Colonic mucosa (tissue), 4 donors: ENCODE measurements at regions of chr3 and their contacts with region 1.

Region 1: GRCh38 chr3:124688581-124689454 is 41.4 kb upstream of the UMPS start:
- DNase-seq: peak; percentile 87
- H3K4me3 ChIP-seq: no peak overlapping the region
- H3K27ac ChIP-seq: no peak overlapping the region
- H3K4me1 ChIP-seq: no peaks in the 10 kb centered on the region
- H3K27me3 ChIP-seq: no peaks in the 10 kb centered on the region
- CTCF ChIP-seq: peak; percentile 85

Region 2: DNA sequence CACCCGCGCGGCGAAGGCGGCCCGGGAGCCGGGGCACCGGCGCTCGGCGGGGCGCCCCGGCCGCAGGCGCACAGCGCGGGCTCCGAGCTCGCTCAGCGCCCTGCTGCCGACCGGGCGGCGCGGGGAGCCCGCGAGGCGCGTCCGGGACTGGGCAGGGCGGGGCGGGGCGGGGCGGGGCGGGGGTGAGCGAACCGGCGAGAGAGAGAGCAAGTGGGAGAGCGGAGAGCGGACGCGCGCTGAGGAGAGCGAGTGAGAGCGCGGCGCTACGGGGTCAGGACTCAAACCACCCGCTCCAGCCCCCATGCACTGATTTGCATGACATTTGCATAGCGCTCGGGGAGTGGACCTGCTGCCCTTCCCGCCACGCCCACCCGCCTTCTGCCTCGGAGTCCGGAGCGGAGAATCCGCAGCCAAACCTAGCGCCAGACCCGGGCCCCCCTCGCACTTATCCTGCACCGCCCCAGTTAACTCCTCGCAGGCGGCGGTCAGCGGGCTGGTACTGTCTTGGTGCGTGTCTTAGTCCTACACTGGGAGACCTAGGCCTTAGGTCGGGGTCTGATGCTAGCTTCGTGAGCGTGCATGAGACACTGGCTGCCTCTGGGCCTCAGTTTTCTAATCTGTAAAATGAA is 804.5 kb before region 1 on chr3 and contains the start of gene MYLK:
- intact Hi-C with region 1: no loop called
- DNase-seq: peak; percentile 69
- H3K4me3 ChIP-seq: peak within 1 kb of the TSS; percentile 45
- H3K27ac ChIP-seq: no peak within 1 kb of the TSS
- H3K4me1 ChIP-seq: peaks cover 4% of the 10 kb centered on the region
- H3K27me3 ChIP-seq: no peaks in the 10 kb centered on the region
- CTCF ChIP-seq: no peak
- total RNA-seq, gene MYLK: 58.8 to 267 TPM

Region 3: DNA sequence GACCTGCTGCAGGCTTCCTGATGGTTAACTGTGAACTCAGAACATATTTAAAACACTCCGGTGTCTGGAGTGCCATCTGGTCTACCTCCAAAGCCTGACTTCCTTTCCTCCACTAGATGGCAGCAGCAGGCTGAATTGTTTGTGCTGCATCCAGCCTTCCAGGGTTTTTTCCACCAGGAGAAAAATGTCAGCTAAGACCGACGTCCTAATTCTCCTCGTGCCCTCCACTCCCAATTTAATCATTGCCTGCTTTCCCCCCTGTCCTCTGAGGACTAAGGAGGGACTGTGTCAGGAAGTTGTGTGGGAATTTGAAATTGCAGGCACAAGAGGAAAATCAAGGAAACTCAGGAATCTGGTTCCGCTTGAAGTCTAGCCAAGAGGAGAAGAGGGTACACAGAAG is 123.8 kb before region 1 on chr3:
- intact Hi-C with region 1: loop called (anchors 2 kb)
- DNase-seq: peak; percentile 89
- H3K4me3 ChIP-seq: no peak overlapping the region
- H3K27ac ChIP-seq: no peak overlapping the region
- H3K4me1 ChIP-seq: no peaks in the 10 kb centered on the region
- H3K27me3 ChIP-seq: no peaks in the 10 kb centered on the region
- CTCF ChIP-seq: peak; percentile 88

Region 4: GRCh38 chr3:124620600-124621063 is 68.2 kb before region 1 on chr3:
- intact Hi-C with region 1: loop called (anchors 5 kb)
- DNase-seq: peak; percentile 83
- H3K4me3 ChIP-seq: no peak overlapping the region
- H3K27ac ChIP-seq: peak overlapping the region; percentile 55
- H3K4me1 ChIP-seq: no peaks in the 10 kb centered on the region
- H3K27me3 ChIP-seq: no peaks in the 10 kb centered on the region
- CTCF ChIP-seq: peak; percentile 32

Region 5: GRCh38 chr3:124663690-124664089 is 25.1 kb before region 1 on chr3:
- intact Hi-C with region 1: no loop called
- DNase-seq: no peak
- H3K4me3 ChIP-seq: no peak overlapping the region
- H3K27ac ChIP-seq: no peak overlapping the region
- H3K4me1 ChIP-seq: no peaks in the 10 kb centered on the region
- H3K27me3 ChIP-seq: no peaks in the 10 kb centered on the region
- CTCF ChIP-seq: no peak